WTC11 (cell line): ENCODE measurements at regions of chr5 and their contacts with region 1.

Region 1: GRCh38 chr5:122515709-122516431 is 203.8 kb downstream of the SNCAIP start:
- DNase-seq: peak; percentile 52
- ATAC-seq: peak; percentile 98
- H3K4me3 Mint-ChIP-seq: no peak overlapping the region; the same call in 1 of the 2 replicates
- H3K27ac Mint-ChIP-seq: peak overlapping the region; percentile 64
- H3K4me1 Mint-ChIP-seq: peaks cover 11% of the 10 kb centered on the region
- H3K27me3 Mint-ChIP-seq: no peaks in the 10 kb centered on the region
- CTCF ChIP-seq: peak; percentile 72

Region 2: DNA sequence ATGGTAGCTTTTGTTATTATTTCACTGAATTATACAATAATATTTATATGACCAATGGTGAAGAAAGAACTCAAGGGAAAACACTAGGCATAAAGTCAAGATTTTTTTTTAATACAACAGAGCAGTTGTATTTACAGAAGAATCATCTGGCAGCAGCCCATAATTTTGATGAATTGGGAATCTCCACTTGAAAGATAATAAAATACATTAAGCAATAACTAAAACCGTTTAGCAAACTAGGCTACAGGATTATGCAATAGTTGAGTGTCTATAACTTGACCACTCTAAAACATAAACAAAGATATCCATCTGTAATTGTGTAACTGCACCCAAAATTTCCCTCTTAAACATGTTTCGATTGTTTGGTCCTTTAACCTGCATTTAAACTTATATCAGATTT is 123.0 kb before region 1 on chr5:
- CTCF ChIA-PET with region 1: no interaction called
- POLR2A ChIA-PET with region 1: no interaction called
- DNase-seq: no peak
- ATAC-seq: no peak
- H3K4me3 Mint-ChIP-seq: no peak overlapping the region
- H3K27ac Mint-ChIP-seq: no peak overlapping the region
- H3K4me1 Mint-ChIP-seq: peaks cover 9% of the 10 kb centered on the region; the same call in 1 of the 2 replicates
- H3K27me3 Mint-ChIP-seq: no peaks in the 10 kb centered on the region
- CTCF ChIP-seq: no peak

Region 3: DNA sequence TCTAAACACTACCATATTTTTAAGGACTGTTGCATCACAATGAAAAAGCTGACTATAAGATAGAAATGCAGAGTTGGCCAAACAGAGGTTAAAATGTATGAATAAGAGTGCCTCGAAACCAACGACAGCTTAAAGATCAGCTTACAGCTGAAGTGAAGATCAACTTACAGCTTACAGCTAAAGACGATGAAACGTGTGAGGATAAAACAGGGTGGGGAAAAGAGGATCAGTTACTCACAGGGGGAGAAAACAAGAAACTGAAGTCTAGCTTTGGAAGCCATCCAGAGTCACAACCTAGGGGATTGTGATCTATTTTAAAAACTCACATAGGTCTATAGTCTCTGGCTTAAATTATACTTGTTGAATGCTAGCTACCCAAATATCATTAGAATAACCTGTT is 16.2 kb after region 1 on chr5:
- CTCF ChIA-PET with region 1: interaction called, 11 read pairs
- POLR2A ChIA-PET with region 1: no interaction called
- DNase-seq: no peak
- ATAC-seq: 0 out of 2 replicates have a peak, but pooled peaks have one; percentile 20
- H3K4me3 Mint-ChIP-seq: no peak overlapping the region
- H3K27ac Mint-ChIP-seq: no peak overlapping the region
- H3K4me1 Mint-ChIP-seq: peaks cover 9% of the 10 kb centered on the region
- H3K27me3 Mint-ChIP-seq: no peaks in the 10 kb centered on the region; the same call in 1 of the 2 replicates
- CTCF ChIP-seq: no peak

Region 4: DNA sequence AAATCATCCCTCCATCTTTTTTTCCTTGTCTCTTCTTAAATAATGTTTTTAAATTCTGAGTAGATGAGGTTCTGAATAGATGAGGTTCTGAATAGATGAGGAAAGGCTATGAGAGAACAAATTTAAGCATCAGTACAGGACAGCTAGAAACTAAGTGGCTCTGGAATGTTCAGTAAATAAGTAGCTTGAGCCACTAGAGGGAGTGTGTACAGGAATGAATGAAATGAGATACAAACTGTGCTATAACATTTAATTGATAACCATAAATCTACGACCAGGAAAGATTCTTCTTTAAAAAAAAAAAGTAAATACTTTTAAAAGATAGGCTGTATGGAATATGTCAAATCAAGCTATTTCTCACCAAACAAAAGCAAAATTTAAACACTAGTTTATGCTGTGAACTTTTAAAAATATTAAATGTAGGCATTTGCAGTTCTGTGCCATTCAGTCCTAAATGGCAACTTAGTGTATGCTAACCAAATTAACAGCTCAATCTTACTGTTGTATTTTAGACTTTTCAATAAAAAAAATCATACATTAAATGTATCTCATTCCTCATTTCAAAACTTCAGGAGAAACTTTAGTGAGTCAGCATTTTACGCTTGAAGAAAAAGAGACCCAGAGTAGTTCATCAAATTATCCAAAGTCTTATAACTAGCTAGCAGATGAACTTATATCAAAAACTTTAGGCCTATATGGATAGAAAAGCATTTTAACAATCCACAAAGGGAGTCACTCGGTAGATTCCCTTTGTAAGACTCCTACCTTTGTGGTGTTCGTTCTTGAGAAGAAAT is 188.6 kb after region 1 on chr5:
- CTCF ChIA-PET with region 1: interaction called, 16 read pairs
- POLR2A ChIA-PET with region 1: no interaction called
- DNase-seq: no peak
- ATAC-seq: peak; percentile 51; the same call in 1 of the 2 replicates
- H3K4me3 Mint-ChIP-seq: no peak overlapping the region
- H3K27ac Mint-ChIP-seq: no peak overlapping the region
- H3K4me1 Mint-ChIP-seq: peaks cover 5% of the 10 kb centered on the region; the same call in 1 of the 2 replicates
- H3K27me3 Mint-ChIP-seq: no peaks in the 10 kb centered on the region; the same call in 1 of the 2 replicates
- CTCF ChIP-seq: no peak

Region 5: DNA sequence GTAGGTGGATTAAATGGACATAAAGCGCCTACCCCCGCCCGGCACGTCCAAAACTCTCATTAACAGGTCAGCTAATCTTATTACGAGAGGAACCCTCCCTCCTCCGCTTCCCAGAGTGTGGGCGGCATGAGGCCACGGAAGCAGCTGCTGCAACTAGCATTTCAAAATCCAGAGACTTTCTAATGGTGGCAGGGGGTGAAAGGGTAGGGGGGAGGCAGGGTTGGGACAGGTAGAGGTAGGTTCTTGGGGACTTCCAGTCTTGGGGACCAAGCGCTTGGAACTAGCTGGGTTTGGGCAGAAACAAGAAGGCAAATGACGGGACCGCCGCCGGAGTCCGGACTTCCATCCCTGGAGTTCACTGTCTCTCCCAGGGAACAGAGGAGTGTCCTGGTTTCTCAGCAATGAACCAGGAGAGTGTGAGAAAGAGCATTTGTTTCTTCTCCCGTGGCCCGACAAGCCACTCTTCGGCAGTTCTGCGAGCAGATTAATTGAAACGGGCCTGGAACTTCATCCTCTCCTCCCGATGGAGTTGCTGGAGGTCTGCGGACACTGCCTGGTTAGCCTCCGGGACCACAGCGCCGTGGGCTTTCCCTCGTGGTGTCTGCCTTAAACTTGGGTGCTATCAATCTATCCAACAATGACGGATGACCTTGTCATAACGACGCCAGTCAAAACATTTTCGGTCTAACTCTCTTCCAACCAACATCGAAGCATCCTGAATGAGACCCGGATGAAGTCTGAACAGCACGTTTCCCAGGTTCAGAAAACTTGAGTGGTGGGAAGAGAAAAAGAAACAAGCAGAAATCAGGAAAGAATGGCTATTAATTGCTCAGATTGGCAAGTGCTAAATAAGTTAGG is 571.5 kb after region 1 on chr5:
- CTCF ChIA-PET with region 1: interaction called, 19 read pairs
- POLR2A ChIA-PET with region 1: interaction called, 3 read pairs
- DNase-seq: no peak
- ATAC-seq: no peak
- H3K4me3 Mint-ChIP-seq: peak overlapping the region; percentile 86
- H3K27ac Mint-ChIP-seq: no peak overlapping the region
- H3K4me1 Mint-ChIP-seq: peaks cover 49% of the 10 kb centered on the region
- H3K27me3 Mint-ChIP-seq: peaks cover 98% of the 10 kb centered on the region
- CTCF ChIP-seq: no peak